H1 (cell line): ENCODE measurements at regions of chr7 and their contacts with region 1.

Region 1: DNA sequence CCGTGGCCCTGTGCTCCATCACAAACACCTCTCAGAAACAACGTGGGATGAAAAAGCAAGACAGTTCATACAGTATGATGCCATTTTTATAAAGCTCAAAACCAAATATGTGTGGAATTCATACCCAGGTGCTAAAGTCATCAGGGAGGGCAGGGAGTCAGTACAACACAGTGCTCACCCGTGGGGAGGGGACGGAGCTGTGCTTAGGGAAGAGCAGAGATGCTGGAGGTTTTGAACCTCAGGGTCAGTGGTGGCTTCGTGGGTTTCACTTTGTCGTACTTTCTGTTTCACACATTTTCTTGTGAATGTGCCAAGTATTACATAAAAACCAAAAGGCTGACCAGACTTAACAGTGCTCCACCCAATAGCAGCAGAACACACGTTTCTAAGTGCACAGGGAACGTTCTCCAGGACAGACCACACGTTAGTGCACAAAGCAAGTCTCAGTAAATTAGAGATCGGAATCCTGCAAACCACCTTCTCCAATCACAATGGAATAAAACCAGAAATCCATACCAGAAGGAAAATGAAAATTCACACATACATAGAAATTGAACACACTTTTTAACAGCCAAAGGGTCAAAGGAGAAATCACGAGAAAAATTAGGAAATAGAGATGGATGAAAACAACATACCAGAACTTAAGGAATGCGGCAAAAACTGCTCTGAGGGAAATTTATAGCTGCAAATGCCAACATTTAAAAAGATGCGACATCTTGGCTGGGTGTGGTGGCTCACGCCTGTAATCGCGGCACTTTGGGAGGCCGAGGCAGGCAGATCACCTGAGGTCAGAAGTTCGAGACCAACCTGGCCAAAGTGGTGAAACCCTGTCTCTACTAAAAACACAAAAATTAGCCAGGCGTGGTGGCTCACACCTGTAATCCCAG is 21.4 kb downstream of the ZMIZ2 start:
- DNase-seq: no peak
- H3K4me3 ChIP-seq: no peak overlapping the region
- H3K27ac ChIP-seq: no peak overlapping the region
- H3K4me1 ChIP-seq: peaks cover 0 to 4% (median 0%) of the 10 kb centered on the region in 4 experiments; a peak in 1 of 7 replicates
- H3K27me3 ChIP-seq: no peaks in the 10 kb centered on the region
- CTCF ChIP-seq: no peak
- EP300 ChIP-seq: no peak
- POLR2A ChIP-seq: 0 out of 3 replicates have a peak, but pooled peaks of 1 of the 2 experiments have one; percentile 4
- RAD21 ChIP-seq: no peak

Region 2: GRCh38 chr7:44757311-44757710 is 12.7 kb before region 1 on chr7:
- CTCF ChIA-PET with region 1: interaction called, 5 read pairs
- POLR2A ChIA-PET with region 1: interaction called, 12 read pairs
- DNase-seq: no peak
- H3K4me3 ChIP-seq: no peak overlapping the region
- H3K27ac ChIP-seq: no peak overlapping the region
- H3K4me1 ChIP-seq: no peaks in the 10 kb centered on the region
- H3K27me3 ChIP-seq: no peaks in the 10 kb centered on the region; a peak in 1 of 7 replicates
- CTCF ChIP-seq: no peak
- EP300 ChIP-seq: no peak
- POLR2A ChIP-seq: no peak
- RAD21 ChIP-seq: no peak

Region 3: GRCh38 chr7:44805950-44806349 is 35.9 kb after region 1 on chr7:
- CTCF ChIA-PET with region 1: interaction called, 3 read pairs
- POLR2A ChIA-PET with region 1: interaction called, 18 read pairs
- DNase-seq: no peak
- H3K4me3 ChIP-seq: no peak overlapping the region
- H3K27ac ChIP-seq: no peak overlapping the region
- H3K4me1 ChIP-seq: no peaks in the 10 kb centered on the region
- H3K27me3 ChIP-seq: no peaks in the 10 kb centered on the region
- CTCF ChIP-seq: no peak
- EP300 ChIP-seq: no peak
- POLR2A ChIP-seq: no peak
- RAD21 ChIP-seq: no peak